ENCODE measurements at regions of chr1 and their contacts with region 1.

Region 1: DNA sequence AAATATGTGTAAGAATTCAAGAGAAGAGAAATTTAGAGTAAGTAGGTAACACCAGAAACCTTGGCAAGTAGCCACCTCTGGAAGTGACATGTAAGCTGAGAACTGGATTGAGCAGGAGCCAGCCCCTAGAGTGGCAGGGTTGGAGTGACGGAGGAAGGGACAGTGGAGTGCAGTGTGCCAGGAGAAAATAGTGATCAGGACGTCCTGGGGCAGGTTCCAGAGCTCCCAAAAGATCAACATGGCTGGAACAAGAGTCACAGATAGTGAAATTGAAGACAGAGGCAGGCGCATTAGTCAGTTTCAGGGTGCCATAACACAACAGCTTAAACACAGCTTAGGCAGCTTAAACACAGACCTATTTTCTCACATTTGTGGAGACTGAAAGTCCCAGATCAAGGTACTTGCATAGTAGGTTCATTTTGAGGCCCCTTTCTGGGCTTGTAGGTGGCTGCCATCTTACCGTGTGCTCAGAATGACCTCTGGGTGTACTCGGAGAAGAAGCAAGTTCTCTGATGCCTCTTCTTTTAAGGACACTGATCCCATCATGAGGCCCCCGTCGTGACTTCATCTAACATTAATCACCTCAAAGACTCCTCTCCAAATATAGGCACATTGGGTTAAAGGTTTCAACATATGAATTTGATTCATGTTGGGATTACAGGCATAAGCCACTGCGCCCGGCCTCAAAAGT is 37.2 kb downstream of the GNPAT start:
- DNase-seq: peak; percentile 51
- H3K4me3 Mint-ChIP-seq: no peak overlapping the region
- H3K27ac Mint-ChIP-seq: peak overlapping the region; percentile 40
- H3K4me1 Mint-ChIP-seq: peaks cover 20% of the 10 kb centered on the region
- H3K27me3 Mint-ChIP-seq: no peaks in the 10 kb centered on the region
- CTCF ChIP-seq: no peak

Region 2: GRCh38 chr1:230957580-230957989 is 320.7 kb before region 1 on chr1:
- CTCF ChIA-PET with region 1: no interaction called
- POLR2A ChIA-PET with region 1: no interaction called
- intact Hi-C with region 1: no loop called
- DNase-seq: no peak
- H3K4me3 Mint-ChIP-seq: no peak overlapping the region
- H3K27ac Mint-ChIP-seq: no peak overlapping the region
- H3K4me1 Mint-ChIP-seq: no peaks in the 10 kb centered on the region
- H3K27me3 Mint-ChIP-seq: no peaks in the 10 kb centered on the region
- CTCF ChIP-seq: no peak

Region 3: GRCh38 chr1:231200388-231201031 is 77.7 kb before region 1 on chr1:
- CTCF ChIA-PET with region 1: no interaction called
- POLR2A ChIA-PET with region 1: no interaction called
- intact Hi-C with region 1: no loop called
- DNase-seq: peak; percentile 31
- H3K4me3 Mint-ChIP-seq: no peak overlapping the region
- H3K27ac Mint-ChIP-seq: no peak overlapping the region
- H3K4me1 Mint-ChIP-seq: no peaks in the 10 kb centered on the region
- H3K27me3 Mint-ChIP-seq: peaks cover 53% of the 10 kb centered on the region
- CTCF ChIP-seq: no peak

Region 4: GRCh38 chr1:231266811-231267322 is 11.4 kb before region 1 on chr1:
- CTCF ChIA-PET with region 1: interaction called, 4 read pairs
- POLR2A ChIA-PET with region 1: interaction called, 13 read pairs
- intact Hi-C with region 1: no loop called
- DNase-seq: no peak
- H3K4me3 Mint-ChIP-seq: no peak overlapping the region
- H3K27ac Mint-ChIP-seq: no peak overlapping the region
- H3K4me1 Mint-ChIP-seq: no peaks in the 10 kb centered on the region
- H3K27me3 Mint-ChIP-seq: no peaks in the 10 kb centered on the region
- CTCF ChIP-seq: no peak